Naive thymus-derived CD4-positive, alpha-beta T cell (primary cell): ENCODE measurements at regions of chr4 and their contacts with region 1.

Region 1: DNA sequence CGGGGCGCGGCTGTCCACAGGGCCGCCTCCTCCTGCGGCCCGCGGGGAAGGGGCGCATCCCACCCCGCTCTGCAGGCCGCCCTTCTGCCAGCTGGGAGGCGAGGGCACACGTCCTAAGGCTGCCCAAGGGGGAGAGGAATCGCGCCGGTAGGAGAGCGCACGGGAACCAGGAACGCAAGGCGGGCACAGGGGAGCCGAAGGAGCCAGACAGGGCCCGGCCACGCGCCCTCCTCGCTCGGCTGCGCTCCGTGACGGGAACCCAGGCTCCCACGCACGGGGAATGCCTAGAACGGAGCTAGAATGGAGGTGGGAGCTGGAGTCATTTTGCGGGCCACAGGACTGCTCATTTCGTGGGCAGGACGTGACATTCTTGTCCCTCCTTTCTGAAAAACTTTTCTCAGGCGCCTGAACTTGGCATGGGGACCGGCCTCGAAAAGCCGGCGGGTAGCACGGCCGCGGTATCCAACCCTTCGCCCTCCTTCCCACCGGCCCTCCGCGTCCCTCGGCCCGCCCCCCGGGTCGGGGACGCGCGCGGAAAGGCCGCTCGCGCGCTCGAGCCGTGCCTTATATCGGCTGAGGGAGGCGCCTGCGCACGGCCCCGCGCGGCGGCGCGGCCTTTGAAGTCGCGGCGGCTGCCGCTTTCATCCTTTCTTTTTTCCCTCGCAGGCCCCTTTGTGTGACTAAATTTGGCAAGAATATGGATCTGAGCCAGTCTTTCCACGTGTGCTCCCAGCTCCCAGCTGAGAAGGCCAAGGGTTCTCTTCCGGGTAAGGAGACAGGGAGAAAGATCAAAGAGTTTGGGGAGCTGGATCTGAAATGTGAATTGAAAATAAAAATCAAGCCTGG is 4.2 kb upstream of the LEF1 start:
- DNase-seq: peak; percentile 68 to 81 (median 78)
- ATAC-seq: peak; percentile 67
- H3K4me3 ChIP-seq: peak overlapping the region; percentile 86
- H3K4me3 Mint-ChIP-seq: peak overlapping the region; percentile 89 to 100 (median 94)
- H3K27ac ChIP-seq: peak overlapping the region; percentile 93
- H3K27ac Mint-ChIP-seq: peak overlapping the region; percentile 90 to 97 (median 95)
- H3K4me1 ChIP-seq: peaks cover 3 to 33% of the 10 kb centered on the region in 2 donors
- H3K4me1 Mint-ChIP-seq: peaks cover 27 to 71% (median 61%) of the 10 kb centered on the region in 7 donors
- H3K27me3 ChIP-seq: no peaks in the 10 kb centered on the region
- H3K27me3 Mint-ChIP-seq: peaks cover 0 to 30% (median 0%) of the 10 kb centered on the region in 5 donors

Region 2: GRCh38 chr4:106369456-106370060 is 1803.4 kb before region 1 on chr4:
- CTCF ChIA-PET with region 1: no interaction called
- POLR2A ChIA-PET with region 1: no interaction called
- intact Hi-C with region 1: no loop called
- DNase-seq: peak in 5 of 9 donors; percentile 1 to 28 (median 1)
- ATAC-seq: peak; percentile 60
- H3K4me3 ChIP-seq: no peak overlapping the region
- H3K4me3 Mint-ChIP-seq: no peak overlapping the region
- H3K27ac ChIP-seq: no peak overlapping the region
- H3K27ac Mint-ChIP-seq: no peak overlapping the region
- H3K4me1 ChIP-seq: no peaks in the 10 kb centered on the region
- H3K4me1 Mint-ChIP-seq: peaks cover 0 to 5% (median 0%) of the 10 kb centered on the region in 7 donors
- H3K27me3 ChIP-seq: no peaks in the 10 kb centered on the region
- H3K27me3 Mint-ChIP-seq: peaks cover 19 to 31% (median 24%) of the 10 kb centered on the region in 5 donors

Region 3: GRCh38 chr4:107027379-107027778 is 1145.6 kb before region 1 on chr4:
- CTCF ChIA-PET with region 1: no interaction called
- POLR2A ChIA-PET with region 1: no interaction called
- intact Hi-C with region 1: no loop called
- DNase-seq: no peak
- ATAC-seq: no peak
- H3K4me3 ChIP-seq: no peak overlapping the region
- H3K4me3 Mint-ChIP-seq: no peak overlapping the region
- H3K27ac ChIP-seq: no peak overlapping the region
- H3K27ac Mint-ChIP-seq: no peak overlapping the region
- H3K4me1 ChIP-seq: no peaks in the 10 kb centered on the region
- H3K4me1 Mint-ChIP-seq: no peaks in the 10 kb centered on the region
- H3K27me3 ChIP-seq: no peaks in the 10 kb centered on the region
- H3K27me3 Mint-ChIP-seq: peaks cover 0 to 8% (median 2%) of the 10 kb centered on the region in 5 donors

Region 4: DNA sequence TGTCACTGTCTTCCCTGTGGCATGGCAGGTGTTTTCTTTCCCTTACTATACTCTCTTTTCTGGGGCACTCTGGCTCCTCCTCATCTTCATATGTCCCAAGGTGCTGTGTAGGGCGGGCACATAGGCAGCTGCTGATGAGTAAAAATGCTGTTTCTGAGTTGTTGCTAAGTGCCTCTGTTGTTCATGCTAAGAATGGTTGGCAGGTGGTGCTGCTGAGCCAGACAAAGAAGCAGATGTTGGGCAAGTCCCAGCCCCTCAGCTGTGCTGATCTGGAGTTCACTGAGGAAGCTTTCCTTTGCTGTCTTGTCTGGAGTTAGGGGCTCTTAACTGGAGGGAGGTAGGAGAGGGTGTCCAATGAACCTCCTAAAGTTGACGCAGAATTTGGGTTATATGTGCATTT is 142.6 kb before region 1 on chr4:
- CTCF ChIA-PET with region 1: interaction called, 24 read pairs
- POLR2A ChIA-PET with region 1: interaction called, 120 read pairs
- intact Hi-C with region 1: loop called in 1 of 2 experiments (anchors 1 kb)
- DNase-seq: peak; percentile 30 to 85 (median 78)
- ATAC-seq: peak; percentile 91
- H3K4me3 ChIP-seq: no peak overlapping the region
- H3K4me3 Mint-ChIP-seq: peak overlapping the region; percentile 70 to 84 (median 76)
- H3K27ac ChIP-seq: peak overlapping the region; percentile 61
- H3K27ac Mint-ChIP-seq: peak overlapping the region; percentile 86 to 96 (median 94)
- H3K4me1 ChIP-seq: peaks cover 9 to 53% of the 10 kb centered on the region in 2 donors
- H3K4me1 Mint-ChIP-seq: peaks cover 28 to 77% (median 66%) of the 10 kb centered on the region in 7 donors
- H3K27me3 ChIP-seq: no peaks in the 10 kb centered on the region
- H3K27me3 Mint-ChIP-seq: no peaks in the 10 kb centered on the region

Region 5: DNA sequence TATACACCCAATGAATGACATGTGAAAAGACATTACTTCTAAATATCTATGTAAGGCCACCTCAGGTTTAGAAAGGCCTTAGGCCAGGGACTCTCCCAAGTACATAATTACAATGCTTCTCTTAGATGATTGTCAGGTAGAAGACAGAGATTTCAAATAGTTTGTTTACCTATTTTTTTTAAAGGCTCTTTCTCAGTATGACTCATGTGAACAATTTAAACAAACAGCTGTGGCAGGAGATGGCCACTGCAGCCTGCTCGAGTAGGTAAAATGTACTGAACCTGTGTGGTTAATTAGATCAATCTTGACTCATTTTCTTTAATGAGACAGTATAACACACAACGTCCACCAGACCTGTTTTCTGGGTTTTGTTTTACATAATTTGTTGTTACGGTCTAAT is 54.5 kb before region 1 on chr4:
- CTCF ChIA-PET with region 1: no interaction called
- POLR2A ChIA-PET with region 1: interaction called, 160 read pairs
- intact Hi-C with region 1: loop called in 1 of 2 experiments (anchors 1 kb)
- DNase-seq: peak in 1 of 9 donors; percentile 74
- ATAC-seq: peak; percentile 59
- H3K4me3 ChIP-seq: no peak overlapping the region
- H3K4me3 Mint-ChIP-seq: peak overlapping the region in 9 of 10 donors; percentile 57 to 89 (median 77)
- H3K27ac ChIP-seq: peak overlapping the region; percentile 80
- H3K27ac Mint-ChIP-seq: peak overlapping the region; percentile 84 to 98 (median 90)
- H3K4me1 ChIP-seq: peaks cover 58 to 97% of the 10 kb centered on the region in 2 donors
- H3K4me1 Mint-ChIP-seq: peaks cover 61 to 99% (median 97%) of the 10 kb centered on the region in 7 donors
- H3K27me3 ChIP-seq: no peaks in the 10 kb centered on the region
- H3K27me3 Mint-ChIP-seq: no peaks in the 10 kb centered on the region

Region 6: GRCh38 chr4:108155373-108155772 is 17.6 kb before region 1 on chr4:
- CTCF ChIA-PET with region 1: interaction called, 8 read pairs
- POLR2A ChIA-PET with region 1: interaction called, 191 read pairs
- intact Hi-C with region 1: loop called in 1 of 2 experiments (anchors 2 kb)
- DNase-seq: peak in 2 of 9 donors; percentile 38 to 65
- ATAC-seq: peak; percentile 65
- H3K4me3 ChIP-seq: peak overlapping the region; percentile 14
- H3K4me3 Mint-ChIP-seq: peak overlapping the region; percentile 83 to 100 (median 97)
- H3K27ac ChIP-seq: peak overlapping the region; percentile 87
- H3K27ac Mint-ChIP-seq: peak overlapping the region; percentile 66 to 97 (median 92)
- H3K4me1 ChIP-seq: peaks cover 35 to 72% of the 10 kb centered on the region in 2 donors
- H3K4me1 Mint-ChIP-seq: peaks cover 31 to 99% (median 80%) of the 10 kb centered on the region in 7 donors
- H3K27me3 ChIP-seq: no peaks in the 10 kb centered on the region
- H3K27me3 Mint-ChIP-seq: no peaks in the 10 kb centered on the region

Region 7: GRCh38 chr4:108433832-108434231 is 260.9 kb after region 1 on chr4:
- CTCF ChIA-PET with region 1: no interaction called
- POLR2A ChIA-PET with region 1: interaction called, 3 read pairs
- intact Hi-C with region 1: loop called in 1 of 2 experiments (anchors 1 kb)
- DNase-seq: peak in 8 of 9 donors; percentile 48 to 83 (median 72)
- ATAC-seq: peak; percentile 81
- H3K4me3 ChIP-seq: peak overlapping the region; percentile 55
- H3K4me3 Mint-ChIP-seq: peak overlapping the region; percentile 14 to 78 (median 66)
- H3K27ac ChIP-seq: peak overlapping the region; percentile 21
- H3K27ac Mint-ChIP-seq: peak overlapping the region; percentile 70 to 92 (median 86)
- H3K4me1 ChIP-seq: peaks cover 18 to 35% of the 10 kb centered on the region in 2 donors
- H3K4me1 Mint-ChIP-seq: peaks cover 26 to 86% (median 64%) of the 10 kb centered on the region in 7 donors
- H3K27me3 ChIP-seq: no peaks in the 10 kb centered on the region
- H3K27me3 Mint-ChIP-seq: peaks cover 0 to 2% (median 0%) of the 10 kb centered on the region in 5 donors

Region 8: DNA sequence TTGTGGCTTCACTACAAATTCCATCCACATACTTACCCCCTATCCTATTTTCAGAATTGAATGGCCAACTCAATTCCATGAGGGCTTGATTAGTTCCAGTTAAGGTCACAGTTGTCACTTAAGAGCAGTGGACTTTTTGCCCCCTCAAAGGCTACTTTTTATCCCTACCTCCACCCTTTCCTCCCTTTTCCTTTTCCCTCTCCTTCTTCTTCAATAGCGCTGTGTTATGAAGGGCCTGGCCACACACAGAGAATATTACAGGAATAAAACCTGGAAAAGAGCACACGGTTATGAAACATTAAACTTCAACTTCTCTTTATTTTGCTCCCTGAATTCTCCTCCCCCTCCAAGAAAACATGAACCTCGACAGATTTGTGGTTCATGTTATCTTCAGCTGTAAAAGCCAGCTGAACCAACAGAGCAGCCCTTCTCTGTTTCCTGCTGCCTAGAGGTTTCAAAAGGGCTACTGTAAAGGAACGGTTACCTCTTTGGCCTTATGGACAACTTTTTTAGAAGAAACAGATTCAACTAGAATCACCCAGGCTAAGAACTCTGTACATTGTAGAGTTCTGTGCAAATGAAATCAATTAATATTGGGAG is 360.4 kb after region 1 on chr4:
- CTCF ChIA-PET with region 1: no interaction called
- POLR2A ChIA-PET with region 1: interaction called, 3 read pairs
- intact Hi-C with region 1: loop called in 1 of 2 experiments (anchors 5 kb)
- DNase-seq: peak in 1 of 9 donors; percentile 29
- ATAC-seq: no peak
- H3K4me3 ChIP-seq: no peak overlapping the region
- H3K4me3 Mint-ChIP-seq: peak overlapping the region; percentile 52 to 91 (median 66)
- H3K27ac ChIP-seq: no peak overlapping the region
- H3K27ac Mint-ChIP-seq: peak overlapping the region; percentile 28 to 89 (median 69)
- H3K4me1 ChIP-seq: peaks cover 9 to 75% of the 10 kb centered on the region in 2 donors
- H3K4me1 Mint-ChIP-seq: peaks cover 50 to 97% (median 91%) of the 10 kb centered on the region in 7 donors
- H3K27me3 ChIP-seq: no peaks in the 10 kb centered on the region
- H3K27me3 Mint-ChIP-seq: no peaks in the 10 kb centered on the region

Region 9: GRCh38 chr4:109559983-109560686 is 1387.2 kb after region 1 on chr4 and contains the start of gene MCUB:
- CTCF ChIA-PET with region 1: no interaction called
- POLR2A ChIA-PET with region 1: no interaction called
- intact Hi-C with region 1: loop called in 1 of 2 experiments (anchors 5 kb)
- DNase-seq: peak; percentile 80 to 95 (median 93)
- ATAC-seq: peak; percentile 96
- H3K4me3 ChIP-seq: peak within 1 kb of the TSS; percentile 83
- H3K4me3 Mint-ChIP-seq: peak within 1 kb of the TSS; percentile 89 to 100 (median 98)
- H3K27ac ChIP-seq: peak within 1 kb of the TSS; percentile 96
- H3K27ac Mint-ChIP-seq: peak within 1 kb of the TSS; percentile 90 to 100 (median 98)
- H3K4me1 ChIP-seq: peaks cover 25 to 41% of the 10 kb centered on the region in 2 donors
- H3K4me1 Mint-ChIP-seq: peaks cover 34 to 76% (median 58%) of the 10 kb centered on the region in 7 donors
- H3K27me3 ChIP-seq: no peaks in the 10 kb centered on the region
- H3K27me3 Mint-ChIP-seq: no peaks in the 10 kb centered on the region
- total RNA-seq, gene MCUB: 83.4 to 177 (median 114) TPM